Activated T-helper 1 cell treated with anti-CD3 and anti-CD28 coated beads, Interleukin-12 subunit alpha, Interleukin-12 subunit beta, Interleukin-2, Interleukin-4 antibody, amounts not matched to agents 30 ng/mL and 10 ng/mL and 1 ng/mL, durations not matched to agents 14 hours and 24 hours and 36 hours (primary cell): ENCODE measurements at regions of chr16 and their contacts with region 1.

Region 1: GRCh38 chr16:3503523-3503922 is 2.7 kb downstream of the CLUAP1 start:
- DNase-seq: peak; percentile 65
- H3K4me3 Mint-ChIP-seq: peak overlapping the region; percentile 77
- H3K27ac Mint-ChIP-seq: peak overlapping the region; percentile 90
- H3K4me1 Mint-ChIP-seq: peaks cover 68% of the 10 kb centered on the region
- H3K27me3 Mint-ChIP-seq: peaks cover 3% of the 10 kb centered on the region

Region 2: GRCh38 chr16:2911580-2912329 is 591.8 kb before region 1 on chr16 and contains the start of gene FLYWCH1:
- intact Hi-C with region 1: no loop called
- DNase-seq: peak; percentile 99
- H3K4me3 Mint-ChIP-seq: peak within 1 kb of the TSS; percentile 86
- H3K27ac Mint-ChIP-seq: peak within 1 kb of the TSS; percentile 76
- H3K4me1 Mint-ChIP-seq: peaks cover 24% of the 10 kb centered on the region
- H3K27me3 Mint-ChIP-seq: peaks cover 6% of the 10 kb centered on the region
- total RNA-seq, gene FLYWCH1: 61.1 and 65.7 TPM in 2 replicates

Region 3: GRCh38 chr16:3188925-3189825 is 314.3 kb before region 1 on chr16:
- intact Hi-C with region 1: loop called (anchors 2 kb)
- DNase-seq: no peak
- H3K4me3 Mint-ChIP-seq: peak overlapping the region; percentile 73
- H3K27ac Mint-ChIP-seq: peak overlapping the region; percentile 85
- H3K4me1 Mint-ChIP-seq: peaks cover 44% of the 10 kb centered on the region
- H3K27me3 Mint-ChIP-seq: peaks cover 46% of the 10 kb centered on the region

Region 4: DNA sequence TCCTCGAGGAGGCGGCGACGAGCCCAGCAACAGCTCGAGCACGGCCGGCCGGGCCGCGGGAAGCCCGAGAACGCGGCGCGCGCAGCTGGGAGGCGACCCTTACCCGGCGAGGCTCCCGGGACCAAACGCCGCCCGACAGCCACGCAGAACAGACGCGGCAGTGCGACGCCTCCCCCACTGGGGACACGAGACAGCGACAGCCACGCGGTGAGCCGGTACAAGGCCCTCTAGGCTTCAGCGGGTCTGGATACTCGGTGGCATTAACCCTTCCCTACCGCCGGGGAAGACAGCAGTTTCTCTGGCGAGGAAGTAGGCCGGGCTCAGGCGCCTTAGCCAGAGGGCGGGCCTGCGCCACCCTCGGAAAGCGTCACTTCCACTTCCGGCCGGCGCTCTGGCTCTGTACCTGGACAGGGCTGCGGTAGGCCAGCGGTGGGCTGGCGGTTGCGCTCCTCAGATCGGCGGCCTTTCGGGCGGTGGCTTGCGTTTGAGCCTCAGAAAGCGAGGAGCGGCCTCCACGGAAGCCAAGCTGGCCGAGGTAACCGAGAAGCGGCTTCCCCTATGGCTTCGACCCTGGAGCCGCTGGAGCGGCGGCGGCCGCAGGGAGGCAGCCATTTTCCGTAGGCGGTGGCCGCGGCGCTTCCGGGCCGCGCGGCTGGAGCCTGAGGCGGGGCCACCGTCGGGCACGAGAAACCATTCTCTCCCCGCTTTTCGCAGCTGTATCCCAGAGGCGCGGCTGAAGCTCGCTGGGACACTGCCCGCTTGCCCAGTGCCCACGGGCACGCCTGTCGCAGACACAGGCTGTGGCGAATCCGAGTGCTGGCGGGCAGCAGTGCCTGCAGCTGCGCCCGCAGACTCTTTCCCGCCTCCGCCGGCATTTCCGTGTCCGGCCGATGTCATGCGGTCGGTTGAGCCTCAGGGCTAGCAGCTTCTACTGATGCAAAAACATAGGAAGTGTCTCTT is 198.1 kb before region 1 on chr16 and contains the starts of genes TIGD7 and ZNF75A:
- intact Hi-C with region 1: loop called (anchors 1 kb)
- DNase-seq: peak; percentile 79
- H3K4me3 Mint-ChIP-seq: peak within 1 kb of the TSS; percentile 75
- H3K27ac Mint-ChIP-seq: peak within 1 kb of the TSS; percentile 70
- H3K4me1 Mint-ChIP-seq: peaks cover 8% of the 10 kb centered on the region
- H3K27me3 Mint-ChIP-seq: no peaks in the 10 kb centered on the region
- total RNA-seq, gene TIGD7: 2.0 and 3.1 TPM in 2 replicates
- total RNA-seq, gene ZNF75A: 26.5 and 27.6 TPM in 2 replicates

Region 5: GRCh38 chr16:3457434-3458252 is 45.9 kb before region 1 on chr16:
- intact Hi-C with region 1: loop called (anchors 1 kb)
- DNase-seq: peak; percentile 88
- H3K4me3 Mint-ChIP-seq: peak overlapping the region; percentile 83
- H3K27ac Mint-ChIP-seq: peak overlapping the region; percentile 77
- H3K4me1 Mint-ChIP-seq: peaks cover 42% of the 10 kb centered on the region
- H3K27me3 Mint-ChIP-seq: no peaks in the 10 kb centered on the region

Region 6: GRCh38 chr16:3611146-3611975 is 107.8 kb after region 1 on chr16 and contains the start of gene SLX4:
- intact Hi-C with region 1: loop called (anchors 1 kb)
- DNase-seq: peak; percentile 93
- H3K4me3 Mint-ChIP-seq: peak within 1 kb of the TSS; percentile 98
- H3K27ac Mint-ChIP-seq: peak within 1 kb of the TSS; percentile 97
- H3K4me1 Mint-ChIP-seq: peaks cover 52% of the 10 kb centered on the region
- H3K27me3 Mint-ChIP-seq: no peaks in the 10 kb centered on the region
- total RNA-seq, gene SLX4: 10.3 and 10.8 TPM in 2 replicates